ENCODE measurements at regions of chr19 and their contacts with region 1.

Region 1: DNA sequence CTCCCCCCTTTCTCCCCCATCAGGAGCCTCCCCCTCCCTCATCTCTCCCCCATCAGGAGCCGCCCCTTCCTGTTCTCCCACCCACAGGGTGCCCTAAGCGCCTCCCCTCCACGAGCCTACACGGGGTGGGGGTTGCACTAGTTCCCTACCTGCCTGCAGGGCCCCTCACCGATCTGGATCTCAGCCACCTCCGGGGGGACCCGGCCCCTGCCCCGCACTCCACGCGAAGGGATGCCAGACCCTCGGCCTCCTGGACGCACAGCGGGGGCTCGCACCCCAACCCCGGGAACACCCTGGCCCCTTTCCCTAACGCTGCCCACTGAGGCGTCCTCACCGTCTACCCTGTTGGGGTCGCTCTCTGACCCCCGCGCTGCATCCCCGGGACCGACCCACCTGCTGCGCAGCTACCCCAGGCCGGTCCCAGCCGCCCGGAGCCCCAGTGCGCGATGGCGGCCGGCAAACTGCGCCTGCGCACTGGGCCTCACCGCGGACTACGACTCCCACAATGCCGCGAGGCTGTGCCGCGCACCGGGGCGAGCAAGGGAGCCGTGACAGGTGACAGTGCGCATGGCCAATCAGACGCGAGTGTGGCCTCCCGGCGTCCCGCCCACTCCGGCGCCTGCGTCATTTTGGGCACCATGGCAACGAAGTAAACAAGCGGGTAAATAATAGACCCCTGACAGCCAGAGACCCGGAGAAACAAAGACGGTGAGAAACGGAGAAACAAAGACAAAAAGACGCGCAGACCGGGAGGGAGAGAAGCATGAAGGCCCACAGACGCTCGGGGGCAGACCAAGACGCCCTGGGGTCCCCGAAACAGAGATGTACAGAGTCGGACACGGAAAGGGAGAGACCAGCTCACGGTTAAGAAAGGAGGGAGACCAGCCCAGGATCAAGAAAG is at the start of gene ZSCAN18:
- DNase-seq: peak; percentile 90 to 99 (median 97)
- ATAC-seq: peak; percentile 95
- H3K4me3 ChIP-seq: peak within 1 kb of the TSS; percentile 90 to 98
- H3K4me3 Mint-ChIP-seq: peak within 1 kb of the TSS; percentile 88
- H3K27ac ChIP-seq: peak within 1 kb of the TSS; percentile 97 to 100
- H3K27ac Mint-ChIP-seq: peak within 1 kb of the TSS; percentile 100
- H3K4me1 ChIP-seq: peaks cover 12% of the 10 kb centered on the region
- H3K4me1 Mint-ChIP-seq: peaks cover 18% of the 10 kb centered on the region
- H3K27me3 ChIP-seq: no peaks in the 10 kb centered on the region
- H3K27me3 Mint-ChIP-seq: no peaks in the 10 kb centered on the region
- CTCF ChIP-seq: no peak
- total RNA-seq, gene ZSCAN18: 57.6 to 61.0 TPM

Region 2: GRCh38 chr19:57171551-57172081 is 926.4 kb before region 1 on chr19:
- CTCF ChIA-PET with region 1: no interaction called
- POLR2A ChIA-PET with region 1: no interaction called
- intact Hi-C with region 1: loop called in 1 of 2 experiments (anchors 5 kb)
- DNase-seq: peak in 5 of 9 experiments; percentile 44 to 78 (median 53)
- ATAC-seq: peak; percentile 82
- H3K4me3 ChIP-seq: peak overlapping the region; percentile 33 to 41
- H3K4me3 Mint-ChIP-seq: peak overlapping the region; percentile 82
- H3K27ac ChIP-seq: peak overlapping the region in 1 of 2 experiments; percentile 42
- H3K27ac Mint-ChIP-seq: peak overlapping the region; percentile 81
- H3K4me1 ChIP-seq: peaks cover 4% of the 10 kb centered on the region
- H3K4me1 Mint-ChIP-seq: peaks cover 16% of the 10 kb centered on the region
- H3K27me3 ChIP-seq: no peaks in the 10 kb centered on the region
- H3K27me3 Mint-ChIP-seq: no peaks in the 10 kb centered on the region
- CTCF ChIP-seq: no peak

Region 3: GRCh38 chr19:58182989-58183816 is 85.2 kb after region 1 on chr19 and contains the start of gene ZNF274:
- CTCF ChIA-PET with region 1: no interaction called
- POLR2A ChIA-PET with region 1: no interaction called
- intact Hi-C with region 1: loop called in 1 of 2 experiments (anchors 1 kb)
- DNase-seq: peak; percentile 88 to 96 (median 94)
- ATAC-seq: peak; percentile 86
- H3K4me3 ChIP-seq: peak within 1 kb of the TSS; percentile 90 to 94
- H3K4me3 Mint-ChIP-seq: peak within 1 kb of the TSS; percentile 91
- H3K27ac ChIP-seq: peak within 1 kb of the TSS; percentile 99 to 100
- H3K27ac Mint-ChIP-seq: peak within 1 kb of the TSS; percentile 100
- H3K4me1 ChIP-seq: peaks cover 9% of the 10 kb centered on the region
- H3K4me1 Mint-ChIP-seq: peaks cover 22% of the 10 kb centered on the region
- H3K27me3 ChIP-seq: no peaks in the 10 kb centered on the region
- H3K27me3 Mint-ChIP-seq: no peaks in the 10 kb centered on the region
- CTCF ChIP-seq: no peak
- total RNA-seq, gene ZNF274: 52.7 to 58.9 TPM

Measured in CD8-positive, alpha-beta T cell (primary cell).